Endothelial cell of umbilical vein (primary cell): ENCODE measurements at regions of chr1 and their contacts with region 1.

Region 1: GRCh38 chr1:69737527-69738185 is 169.9 kb downstream of the LRRC7 start:
- DNase-seq: peak; percentile 70
- H3K4me3 ChIP-seq: no peak overlapping the region
- H3K27ac ChIP-seq: no peak overlapping the region
- H3K4me1 ChIP-seq: no peaks in the 10 kb centered on the region
- H3K27me3 ChIP-seq: no peaks in the 10 kb centered on the region
- CTCF ChIP-seq: peak; percentile 59 to 61
- POLR2A ChIP-seq: no peak

Region 2: DNA sequence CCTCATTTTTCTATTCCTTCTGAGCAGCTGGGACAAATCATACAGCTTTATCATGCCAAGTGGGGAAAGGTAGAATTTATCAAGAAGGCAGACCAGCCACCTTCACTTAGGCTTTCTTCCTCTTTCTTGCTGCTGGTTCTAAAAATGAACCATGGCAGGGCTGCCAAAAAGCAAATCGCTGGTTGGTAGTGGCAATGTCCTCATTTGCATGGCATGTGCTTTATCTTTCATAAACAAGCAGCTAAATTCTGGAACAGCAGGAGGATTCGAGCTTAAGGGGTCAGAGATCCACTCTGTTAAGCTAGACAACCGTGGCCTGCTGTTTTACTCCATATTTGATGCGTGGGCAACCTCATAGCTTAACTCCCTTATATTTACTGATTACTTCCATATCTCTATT is 1379.2 kb before region 1 on chr1:
- CTCF ChIA-PET with region 1: interaction called, 3 read pairs
- POLR2A ChIA-PET with region 1: no interaction called
- dilution Hi-C with region 1: no loop called
- intact Hi-C with region 1: loop called (anchors 10 kb)
- DNase-seq: no peak
- H3K4me3 ChIP-seq: no peak overlapping the region
- H3K27ac ChIP-seq: no peak overlapping the region
- H3K4me1 ChIP-seq: no peaks in the 10 kb centered on the region
- H3K27me3 ChIP-seq: no peaks in the 10 kb centered on the region
- CTCF ChIP-seq: no peak
- POLR2A ChIP-seq: no peak

Region 3: GRCh38 chr1:68470388-68470970 is 1267.2 kb before region 1 on chr1:
- CTCF ChIA-PET with region 1: interaction called, 111 read pairs
- POLR2A ChIA-PET with region 1: no interaction called
- dilution Hi-C with region 1: no loop called
- intact Hi-C with region 1: loop called (anchors 1 kb)
- DNase-seq: peak; percentile 50
- H3K4me3 ChIP-seq: no peak overlapping the region
- H3K27ac ChIP-seq: no peak overlapping the region
- H3K4me1 ChIP-seq: no peaks in the 10 kb centered on the region
- H3K27me3 ChIP-seq: no peaks in the 10 kb centered on the region
- CTCF ChIP-seq: peak; percentile 52 to 58
- POLR2A ChIP-seq: no peak

Region 4: GRCh38 chr1:68600049-68600661 is 1137.5 kb before region 1 on chr1:
- CTCF ChIA-PET with region 1: interaction called, 67 read pairs
- POLR2A ChIA-PET with region 1: no interaction called
- dilution Hi-C with region 1: no loop called
- intact Hi-C with region 1: loop called (anchors 1 kb)
- DNase-seq: peak; percentile 21
- H3K4me3 ChIP-seq: no peak overlapping the region
- H3K27ac ChIP-seq: no peak overlapping the region
- H3K4me1 ChIP-seq: no peaks in the 10 kb centered on the region
- H3K27me3 ChIP-seq: peaks cover 0 to 3% of the 10 kb centered on the region in 2 experiments
- CTCF ChIP-seq: peak; percentile 50
- POLR2A ChIP-seq: no peak

Region 5: GRCh38 chr1:70142075-70142474 is 404.4 kb after region 1 on chr1:
- CTCF ChIA-PET with region 1: interaction called, 13 read pairs
- POLR2A ChIA-PET with region 1: no interaction called
- dilution Hi-C with region 1: no loop called
- intact Hi-C with region 1: no loop called
- DNase-seq: no peak
- H3K4me3 ChIP-seq: no peak overlapping the region
- H3K27ac ChIP-seq: no peak overlapping the region
- H3K4me1 ChIP-seq: no peaks in the 10 kb centered on the region
- H3K27me3 ChIP-seq: no peaks in the 10 kb centered on the region
- CTCF ChIP-seq: no peak
- POLR2A ChIP-seq: no peak